Activated CD8-positive, alpha-beta T cell treated with anti-CD3 and anti-CD28 coated beads for 36 hours (primary cell): ENCODE measurements at regions of chr4 and their contacts with region 1.

Region 1: GRCh38 chr4:104966349-104967033 is 180.2 kb upstream of the TET2 start:
- DNase-seq: peak; percentile 72
- ATAC-seq: peak; percentile 98
- H3K4me3 Mint-ChIP-seq: peak overlapping the region; percentile 49
- H3K27ac Mint-ChIP-seq: peak overlapping the region; percentile 90
- H3K4me1 Mint-ChIP-seq: peaks cover 22% of the 10 kb centered on the region
- H3K27me3 Mint-ChIP-seq: no peaks in the 10 kb centered on the region
- CTCF ChIP-seq: no peak

Region 2: DNA sequence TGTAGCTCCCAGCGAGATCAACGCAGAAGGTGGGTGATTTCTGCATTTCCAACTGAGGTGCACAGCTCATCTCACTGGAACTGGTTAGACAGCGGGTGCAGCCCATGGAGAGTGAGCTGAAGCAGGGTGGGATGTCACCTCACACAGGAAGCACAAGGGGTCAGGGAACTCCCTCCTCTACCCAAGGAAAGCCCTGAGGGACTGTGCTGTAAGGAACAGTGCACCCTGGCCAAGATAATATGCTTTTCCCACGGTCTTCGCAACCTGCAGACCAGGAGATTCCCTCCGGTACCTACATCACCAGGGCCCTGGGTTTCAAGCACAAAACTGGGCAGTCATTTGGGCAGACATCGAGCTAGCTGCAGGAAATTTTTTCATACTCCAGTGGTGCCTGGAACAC is 36.2 kb before region 1 on chr4:
- CTCF ChIA-PET with region 1: no interaction called
- POLR2A ChIA-PET with region 1: no interaction called
- intact Hi-C with region 1: loop called (anchors 5 kb)
- DNase-seq: no peak
- ATAC-seq: no peak
- H3K4me3 Mint-ChIP-seq: no peak overlapping the region
- H3K27ac Mint-ChIP-seq: no peak overlapping the region
- H3K4me1 Mint-ChIP-seq: peaks cover 40% of the 10 kb centered on the region
- H3K27me3 Mint-ChIP-seq: no peaks in the 10 kb centered on the region
- CTCF ChIP-seq: no peak

Region 3: GRCh38 chr4:105025263-105025992 is 58.9 kb after region 1 on chr4:
- CTCF ChIA-PET with region 1: no interaction called
- POLR2A ChIA-PET with region 1: no interaction called
- intact Hi-C with region 1: no loop called
- DNase-seq: no peak
- ATAC-seq: no peak
- H3K4me3 Mint-ChIP-seq: no peak overlapping the region
- H3K27ac Mint-ChIP-seq: no peak overlapping the region
- H3K4me1 Mint-ChIP-seq: no peaks in the 10 kb centered on the region
- H3K27me3 Mint-ChIP-seq: peaks cover 1% of the 10 kb centered on the region
- CTCF ChIP-seq: no peak

Region 4: DNA sequence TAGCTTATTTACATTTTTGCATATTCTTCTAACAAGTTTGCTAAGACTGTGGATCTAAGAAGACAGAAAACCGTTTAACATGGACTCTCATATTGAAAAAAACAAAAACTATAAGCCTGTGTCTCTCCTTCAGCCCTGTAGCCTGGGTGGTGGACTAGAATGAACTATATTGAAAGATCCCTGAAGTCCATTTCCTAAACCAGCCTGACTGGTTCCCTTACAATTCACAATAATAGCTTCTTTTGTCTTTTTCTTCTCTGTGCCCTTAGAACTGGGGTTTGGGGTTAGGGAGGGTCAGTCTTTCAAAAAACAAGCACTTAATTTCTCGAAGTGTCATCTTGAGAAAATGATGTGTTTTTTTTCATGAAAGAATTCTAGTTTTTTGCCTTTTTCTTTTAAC is 801.1 kb after region 1 on chr4:
- CTCF ChIA-PET with region 1: no interaction called
- POLR2A ChIA-PET with region 1: no interaction called
- intact Hi-C with region 1: no loop called
- DNase-seq: no peak
- ATAC-seq: no peak
- H3K4me3 Mint-ChIP-seq: no peak overlapping the region
- H3K27ac Mint-ChIP-seq: no peak overlapping the region
- H3K4me1 Mint-ChIP-seq: no peaks in the 10 kb centered on the region
- H3K27me3 Mint-ChIP-seq: no peaks in the 10 kb centered on the region
- CTCF ChIP-seq: no peak

Region 5: GRCh38 chr4:106238820-106239420 is 1272.4 kb after region 1 on chr4:
- CTCF ChIA-PET with region 1: no interaction called
- POLR2A ChIA-PET with region 1: no interaction called
- intact Hi-C with region 1: no loop called
- DNase-seq: peak; percentile 7
- ATAC-seq: peak; percentile 71
- H3K4me3 Mint-ChIP-seq: no peak overlapping the region
- H3K27ac Mint-ChIP-seq: no peak overlapping the region
- H3K4me1 Mint-ChIP-seq: no peaks in the 10 kb centered on the region
- H3K27me3 Mint-ChIP-seq: no peaks in the 10 kb centered on the region
- CTCF ChIP-seq: peak; percentile 60